PC-3 (cell line): ENCODE measurements at regions of chr1 and their contacts with region 1.

Region 1: DNA sequence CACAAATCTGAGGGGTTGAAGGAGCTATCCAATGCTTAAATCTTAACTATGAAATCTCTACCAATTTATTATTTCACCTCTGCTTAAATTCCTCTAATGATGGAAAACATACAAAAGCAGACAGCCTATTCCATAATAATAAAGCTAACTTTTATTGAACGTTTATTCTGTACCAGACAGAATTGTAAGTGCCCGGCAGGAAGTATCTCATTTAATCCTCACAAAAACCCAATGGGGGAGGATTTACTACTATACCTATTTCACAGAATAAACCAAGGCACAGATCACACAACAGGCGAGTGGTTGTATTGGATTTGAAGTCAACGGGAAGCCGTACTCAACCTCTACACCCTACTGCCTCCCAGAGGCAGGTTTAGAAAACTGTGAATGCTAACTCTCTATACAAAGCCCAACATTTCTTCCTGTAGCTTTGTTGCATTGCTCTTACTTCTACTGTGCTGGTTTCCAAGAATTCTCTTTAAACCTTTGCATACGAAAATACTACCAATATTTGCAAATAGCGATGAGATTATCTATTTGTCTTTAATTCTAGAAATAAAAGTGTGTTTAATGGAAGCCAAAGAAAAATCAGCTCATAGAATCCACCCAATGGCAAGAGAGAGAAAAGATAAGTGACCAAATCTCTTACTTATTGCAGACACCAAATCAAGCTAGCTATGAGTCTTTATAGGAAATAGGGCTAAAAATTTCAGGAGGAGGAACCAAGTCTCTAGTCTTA is 33.5 kb upstream of the C1orf53 start:
- DNase-seq: peak; percentile 66
- ATAC-seq: peak; percentile 91
- H3K4me3 ChIP-seq: no peak overlapping the region
- H3K27ac ChIP-seq: no peak overlapping the region
- H3K4me1 ChIP-seq: no peaks in the 10 kb centered on the region
- H3K27me3 ChIP-seq: no peaks in the 10 kb centered on the region
- CTCF ChIP-seq: peak; percentile 78

Region 2: GRCh38 chr1:197521118-197521739 is 347.7 kb before region 1 on chr1:
- CTCF ChIA-PET with region 1: no interaction called
- POLR2A ChIA-PET with region 1: no interaction called
- intact Hi-C with region 1: loop called (anchors 1 kb)
- DNase-seq: peak; percentile 60
- ATAC-seq: 0 out of 2 replicates have a peak, but pooled peaks have one; percentile 27
- H3K4me3 ChIP-seq: no peak overlapping the region
- H3K27ac ChIP-seq: no peak overlapping the region
- H3K4me1 ChIP-seq: no peaks in the 10 kb centered on the region
- H3K27me3 ChIP-seq: no peaks in the 10 kb centered on the region
- CTCF ChIP-seq: peak; percentile 72

Region 3: DNA sequence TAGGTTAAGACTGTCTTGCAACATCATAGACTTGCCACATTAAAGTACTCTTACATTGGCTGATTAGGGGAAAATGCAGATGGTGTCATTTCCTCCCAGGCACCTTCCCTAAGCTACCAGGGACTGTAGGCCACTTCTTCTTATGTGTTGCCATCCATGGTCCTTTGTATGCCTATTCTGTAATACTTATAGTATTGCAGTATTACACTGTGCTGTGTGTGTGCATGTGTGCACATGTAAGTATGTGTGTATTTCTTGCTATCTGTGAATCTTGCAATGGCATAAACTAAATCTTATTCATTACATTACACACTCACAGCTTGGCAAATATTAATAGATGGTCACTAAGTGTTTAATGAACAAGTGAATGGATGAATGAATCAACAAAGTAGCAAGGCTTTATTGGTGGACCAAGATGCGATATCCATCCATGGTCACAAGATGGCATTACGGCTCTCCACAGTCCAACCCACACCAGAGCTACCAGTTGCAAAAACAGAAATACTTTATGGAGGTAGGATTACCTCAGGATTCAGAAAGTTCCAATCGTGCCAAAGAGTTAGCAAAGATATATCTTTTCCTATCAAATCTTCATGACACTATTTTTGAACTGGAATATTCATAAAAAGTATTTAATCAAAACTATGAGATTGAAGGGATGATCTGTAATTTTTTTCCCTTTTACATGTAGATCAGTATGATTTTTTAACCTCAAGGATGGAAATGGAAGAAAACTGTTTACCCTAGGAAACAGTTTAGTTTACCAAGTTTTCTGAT is 253.8 kb before region 1 on chr1:
- CTCF ChIA-PET with region 1: interaction called, 8 read pairs
- POLR2A ChIA-PET with region 1: no interaction called
- intact Hi-C with region 1: loop called (anchors 1 kb)
- DNase-seq: peak; percentile 46
- ATAC-seq: peak; percentile 72
- H3K4me3 ChIP-seq: no peak overlapping the region
- H3K27ac ChIP-seq: no peak overlapping the region
- H3K4me1 ChIP-seq: no peaks in the 10 kb centered on the region
- H3K27me3 ChIP-seq: no peaks in the 10 kb centered on the region
- CTCF ChIP-seq: peak; percentile 63

Region 4: DNA sequence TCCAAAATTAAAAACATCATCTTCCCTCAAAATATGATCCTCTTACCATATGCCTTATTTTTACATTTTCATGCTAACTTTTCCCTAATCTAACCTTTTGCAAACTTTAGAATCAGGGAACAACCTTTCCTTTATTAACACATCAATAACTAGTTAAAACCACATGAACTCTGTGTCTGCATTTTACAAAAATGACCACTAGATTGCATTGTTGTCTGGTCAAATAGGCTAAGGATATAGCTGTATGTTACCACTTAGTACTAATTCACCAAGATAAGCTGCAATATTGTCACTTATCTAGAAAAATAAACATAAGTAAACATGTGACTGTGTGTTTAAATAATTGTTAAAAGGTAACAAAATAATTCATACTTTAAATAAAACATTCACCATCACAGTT is 176.0 kb before region 1 on chr1:
- CTCF ChIA-PET with region 1: interaction called, 6 read pairs
- POLR2A ChIA-PET with region 1: no interaction called
- intact Hi-C with region 1: loop called (anchors 1 kb)
- DNase-seq: peak; percentile 29
- ATAC-seq: peak; percentile 64
- H3K4me3 ChIP-seq: no peak overlapping the region
- H3K27ac ChIP-seq: no peak overlapping the region
- H3K4me1 ChIP-seq: peaks cover 12% of the 10 kb centered on the region
- H3K27me3 ChIP-seq: no peaks in the 10 kb centered on the region
- CTCF ChIP-seq: peak; percentile 56

Region 5: DNA sequence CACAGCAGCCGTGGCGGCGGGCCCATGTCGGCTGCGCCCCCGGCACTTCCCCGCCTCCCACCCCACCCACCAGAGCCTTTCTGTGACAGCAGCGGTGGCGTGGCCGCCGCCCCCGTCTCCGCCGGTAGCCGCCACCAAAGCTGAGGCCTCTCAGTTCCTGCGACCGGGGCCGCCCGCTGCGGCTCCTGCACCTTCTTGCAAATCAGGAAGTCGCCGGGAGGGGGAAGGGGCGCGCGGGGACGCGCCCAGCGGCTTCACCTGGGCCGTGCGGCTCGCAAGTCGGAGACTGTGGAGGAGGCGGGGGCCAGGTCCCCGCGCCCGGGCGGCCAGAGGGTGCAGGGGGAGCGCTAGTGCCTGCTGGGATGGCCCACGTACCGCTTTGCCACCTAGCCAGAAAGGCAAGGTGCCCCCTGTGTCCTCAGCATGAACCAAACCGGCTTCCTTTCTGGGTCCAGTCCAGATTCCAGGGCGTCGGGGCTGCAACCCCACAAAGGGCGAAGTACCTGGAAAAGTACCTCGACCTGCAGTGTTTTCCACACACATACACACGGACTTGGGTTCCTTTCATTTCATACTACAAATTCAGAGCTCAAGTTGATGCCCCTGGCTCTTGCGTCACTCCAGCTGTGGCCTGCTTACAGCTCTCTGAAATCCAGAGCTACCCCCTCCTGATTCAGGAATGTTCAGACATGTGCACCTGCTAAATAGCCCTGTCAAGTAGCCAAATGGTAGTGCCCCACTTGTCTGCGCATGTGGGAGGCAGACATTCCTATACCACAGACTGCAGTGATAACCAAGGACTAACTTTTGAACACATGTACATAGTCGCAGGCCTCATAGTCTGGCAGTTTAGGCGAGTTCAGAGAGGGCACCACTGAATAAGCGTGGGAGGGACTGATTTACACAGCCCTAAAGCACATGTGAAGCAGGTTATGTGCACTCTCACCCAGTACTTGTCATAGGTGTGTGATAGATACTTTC is 93.3 kb before region 1 on chr1 and contains the start of gene DENND1B:
- CTCF ChIA-PET with region 1: no interaction called
- POLR2A ChIA-PET with region 1: no interaction called
- intact Hi-C with region 1: loop called (anchors 2 kb)
- DNase-seq: peak; percentile 66
- ATAC-seq: peak; percentile 52
- H3K4me3 ChIP-seq: peak within 1 kb of the TSS; percentile 75
- H3K27ac ChIP-seq: peak within 1 kb of the TSS; percentile 97
- H3K4me1 ChIP-seq: peaks cover 33% of the 10 kb centered on the region
- H3K27me3 ChIP-seq: no peaks in the 10 kb centered on the region
- CTCF ChIP-seq: no peak
- total RNA-seq, gene DENND1B: 7.4 and 10.9 TPM in 2 replicates

Region 6: GRCh38 chr1:197915862-197916499 is 47.1 kb after region 1 on chr1:
- CTCF ChIA-PET with region 1: no interaction called
- POLR2A ChIA-PET with region 1: no interaction called
- intact Hi-C with region 1: loop called (anchors 2 kb)
- DNase-seq: peak; percentile 79
- ATAC-seq: peak; percentile 83
- H3K4me3 ChIP-seq: peak overlapping the region; percentile 81
- H3K27ac ChIP-seq: no peak overlapping the region
- H3K4me1 ChIP-seq: peaks cover 4% of the 10 kb centered on the region; the same call in 1 of the 2 replicates
- H3K27me3 ChIP-seq: no peaks in the 10 kb centered on the region
- CTCF ChIP-seq: peak; percentile 70

Region 7: GRCh38 chr1:197924516-197925123 is 55.7 kb after region 1 on chr1:
- CTCF ChIA-PET with region 1: no interaction called
- POLR2A ChIA-PET with region 1: no interaction called
- intact Hi-C with region 1: loop called (anchors 2 kb)
- DNase-seq: peak; percentile 68
- ATAC-seq: peak; percentile 76
- H3K4me3 ChIP-seq: no peak overlapping the region
- H3K27ac ChIP-seq: no peak overlapping the region
- H3K4me1 ChIP-seq: no peaks in the 10 kb centered on the region
- H3K27me3 ChIP-seq: no peaks in the 10 kb centered on the region
- CTCF ChIP-seq: peak; percentile 72